A549 (cell line): ENCODE measurements at regions of chr20 and their contacts with region 1.

Region 1: GRCh38 chr20:51595058-51595532 is 52.6 kb upstream of the NFATC2 start:
- DNase-seq: peak; percentile 89 to 90
- ATAC-seq: peak; percentile 98 to 99
- H3K4me3 ChIP-seq: no peak overlapping the region
- H3K27ac ChIP-seq: peak overlapping the region; percentile 43 to 48; a peak in 3 of 6 replicates
- H3K4me1 ChIP-seq: peaks cover 5% of the 10 kb centered on the region
- CTCF ChIP-seq: peak; percentile 89
- EP300 ChIP-seq: no peak
- POLR2A ChIP-seq: no peak
- RAD21 ChIP-seq: peak; percentile 98 to 99

Region 2: GRCh38 chr20:51287592-51288378 is 307.3 kb before region 1 on chr20:
- CTCF ChIA-PET with region 1: interaction called, 13 read pairs
- POLR2A ChIA-PET with region 1: no interaction called
- DNase-seq: no peak
- ATAC-seq: no peak
- H3K4me3 ChIP-seq: no peak overlapping the region
- H3K27ac ChIP-seq: no peak overlapping the region
- H3K4me1 ChIP-seq: no peaks in the 10 kb centered on the region
- CTCF ChIP-seq: no peak
- EP300 ChIP-seq: no peak
- POLR2A ChIP-seq: no peak
- RAD21 ChIP-seq: no peak

Region 3: DNA sequence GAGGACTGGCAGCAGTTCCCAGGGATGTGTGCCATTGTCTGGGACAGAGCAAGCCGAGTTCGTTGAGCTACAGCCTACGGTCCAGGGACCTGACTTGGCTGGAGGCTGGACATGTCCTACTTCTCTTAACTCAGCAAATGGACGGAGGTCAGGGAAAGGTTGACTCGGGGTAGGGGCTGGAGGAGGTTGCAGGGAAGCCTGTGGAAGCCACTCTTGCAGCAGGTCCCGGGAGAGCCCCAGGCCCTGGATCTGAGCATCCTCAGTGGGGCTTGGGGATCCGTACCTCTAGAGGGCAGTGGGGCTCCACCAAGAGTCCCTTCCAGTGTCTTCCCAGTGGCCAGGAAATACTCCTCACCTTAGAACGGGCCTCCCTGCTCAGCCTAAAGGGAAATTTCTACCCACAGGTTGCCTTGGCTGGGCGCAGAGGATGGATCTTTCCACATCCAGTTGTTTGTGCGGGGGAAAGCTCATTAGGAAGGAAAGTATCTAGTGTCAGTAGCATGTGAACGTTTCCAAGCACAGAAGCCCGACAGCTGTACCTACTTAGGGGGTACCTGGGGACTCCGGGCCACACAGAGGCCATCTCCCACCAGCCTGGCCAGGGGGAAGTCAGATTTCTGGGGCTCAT is 222.8 kb before region 1 on chr20:
- CTCF ChIA-PET with region 1: interaction called, 171 read pairs
- POLR2A ChIA-PET with region 1: no interaction called
- DNase-seq: peak; percentile 73 to 91
- ATAC-seq: peak; percentile 97 to 98
- H3K4me3 ChIP-seq: no peak overlapping the region
- H3K27ac ChIP-seq: peak overlapping the region; percentile 34 to 74
- H3K4me1 ChIP-seq: peaks cover 16% of the 10 kb centered on the region
- CTCF ChIP-seq: peak; percentile 88
- EP300 ChIP-seq: no peak
- POLR2A ChIP-seq: no peak
- RAD21 ChIP-seq: peak; percentile 95 to 97

Region 4: DNA sequence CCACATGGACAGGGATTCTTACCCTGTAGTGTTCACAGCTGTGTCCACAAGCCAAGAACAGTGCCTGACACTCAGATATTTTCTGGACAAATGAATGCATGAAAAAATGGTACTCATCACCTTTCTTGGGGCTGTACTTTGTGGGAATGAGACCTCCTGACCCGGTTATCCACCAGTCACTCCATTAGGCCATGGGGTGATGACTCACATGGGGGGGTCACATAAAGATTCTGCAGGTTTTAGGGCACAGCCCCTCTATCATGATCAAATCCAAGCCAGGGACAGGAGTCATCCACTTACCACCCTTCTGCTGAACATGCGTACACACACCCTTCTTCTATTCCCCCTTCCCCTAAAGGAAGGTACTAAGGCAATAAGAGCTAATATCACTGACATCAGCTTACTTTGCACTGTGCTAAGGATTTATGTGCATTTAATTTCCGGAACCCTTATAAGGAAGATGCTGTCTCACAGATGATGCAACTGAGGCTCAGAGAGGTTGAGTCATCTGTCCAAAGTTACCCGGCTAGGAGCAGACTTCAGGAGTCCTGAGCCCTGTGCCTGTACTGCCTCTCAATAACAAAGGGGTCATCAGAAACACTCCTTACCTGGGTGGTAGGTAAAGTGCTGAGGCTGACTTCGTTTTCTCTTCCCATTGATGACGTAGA is 160.4 kb before region 1 on chr20:
- CTCF ChIA-PET with region 1: interaction called, 19 read pairs
- POLR2A ChIA-PET with region 1: no interaction called
- DNase-seq: peak in 1 of 2 experiments; percentile 60
- ATAC-seq: peak; percentile 77 to 84; a peak in 5 of 6 replicates
- H3K4me3 ChIP-seq: no peak overlapping the region
- H3K27ac ChIP-seq: peak overlapping the region; percentile 47 to 78
- H3K4me1 ChIP-seq: peaks cover 23% of the 10 kb centered on the region
- CTCF ChIP-seq: no peak
- EP300 ChIP-seq: no peak
- POLR2A ChIP-seq: no peak
- RAD21 ChIP-seq: no peak

Region 5: DNA sequence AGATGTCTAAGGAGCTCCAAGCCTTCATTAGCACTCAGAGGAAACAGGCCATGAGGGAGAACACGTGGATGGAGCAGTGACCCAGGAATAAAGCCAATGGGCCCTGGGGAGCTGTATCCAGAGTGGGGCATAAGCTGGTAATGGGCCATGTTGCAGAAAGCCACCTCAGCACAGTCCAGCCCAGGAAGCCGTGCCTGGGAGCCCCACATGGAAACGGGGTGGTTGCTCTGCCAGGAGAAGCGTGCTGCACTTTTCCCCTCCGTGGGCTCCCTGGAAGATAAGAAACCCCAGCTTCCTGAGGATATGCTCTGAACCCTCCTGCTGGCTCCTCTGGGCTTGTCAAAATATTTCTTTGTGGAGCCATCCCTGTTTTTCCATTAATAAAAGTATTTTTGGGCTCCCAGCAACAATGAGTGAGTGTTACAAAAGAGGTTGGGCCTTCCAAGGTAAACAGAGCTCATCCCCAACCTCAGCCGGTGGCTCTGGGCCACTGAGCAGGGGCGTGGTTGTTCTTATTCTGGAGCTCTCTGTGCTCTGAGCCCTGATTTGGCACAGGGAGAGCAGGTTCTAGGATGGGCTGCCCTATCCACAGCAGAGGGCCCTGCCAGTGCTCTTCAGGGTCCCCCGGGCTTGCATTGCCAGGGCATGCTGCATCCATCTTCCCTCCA is 21.4 kb before region 1 on chr20:
- CTCF ChIA-PET with region 1: interaction called, 25 read pairs
- POLR2A ChIA-PET with region 1: no interaction called
- DNase-seq: no peak
- ATAC-seq: no peak
- H3K4me3 ChIP-seq: no peak overlapping the region
- H3K27ac ChIP-seq: no peak overlapping the region
- H3K4me1 ChIP-seq: peaks cover 15% of the 10 kb centered on the region
- CTCF ChIP-seq: no peak
- EP300 ChIP-seq: no peak
- POLR2A ChIP-seq: no peak
- RAD21 ChIP-seq: no peak

Region 6: GRCh38 chr20:51624157-51624731 is 29.1 kb after region 1 on chr20:
- CTCF ChIA-PET with region 1: interaction called, 14 read pairs
- POLR2A ChIA-PET with region 1: no interaction called
- DNase-seq: peak; percentile 75
- ATAC-seq: peak; percentile 76 to 92; a peak in 5 of 6 replicates
- H3K4me3 ChIP-seq: no peak overlapping the region
- H3K27ac ChIP-seq: peak overlapping the region in 1 of 2 experiments; percentile 58; a peak in 4 of 6 replicates
- H3K4me1 ChIP-seq: no peaks in the 10 kb centered on the region
- CTCF ChIP-seq: peak; percentile 78
- EP300 ChIP-seq: no peak
- POLR2A ChIP-seq: no peak
- RAD21 ChIP-seq: peak; percentile 68 to 79